ENCODE measurements at regions of chr11 and their contacts with region 1.

Region 1: GRCh38 chr11:66011239-66011784 is 496 bp upstream of the CST6 start:
- DNase-seq: peak; percentile 97
- H3K4me3 ChIP-seq: no peak overlapping the region
- H3K27ac ChIP-seq: peak overlapping the region; percentile 13
- H3K4me1 ChIP-seq: peaks cover 57% of the 10 kb centered on the region
- H3K27me3 ChIP-seq: no peaks in the 10 kb centered on the region
- CTCF ChIP-seq: no peak

Region 2: DNA sequence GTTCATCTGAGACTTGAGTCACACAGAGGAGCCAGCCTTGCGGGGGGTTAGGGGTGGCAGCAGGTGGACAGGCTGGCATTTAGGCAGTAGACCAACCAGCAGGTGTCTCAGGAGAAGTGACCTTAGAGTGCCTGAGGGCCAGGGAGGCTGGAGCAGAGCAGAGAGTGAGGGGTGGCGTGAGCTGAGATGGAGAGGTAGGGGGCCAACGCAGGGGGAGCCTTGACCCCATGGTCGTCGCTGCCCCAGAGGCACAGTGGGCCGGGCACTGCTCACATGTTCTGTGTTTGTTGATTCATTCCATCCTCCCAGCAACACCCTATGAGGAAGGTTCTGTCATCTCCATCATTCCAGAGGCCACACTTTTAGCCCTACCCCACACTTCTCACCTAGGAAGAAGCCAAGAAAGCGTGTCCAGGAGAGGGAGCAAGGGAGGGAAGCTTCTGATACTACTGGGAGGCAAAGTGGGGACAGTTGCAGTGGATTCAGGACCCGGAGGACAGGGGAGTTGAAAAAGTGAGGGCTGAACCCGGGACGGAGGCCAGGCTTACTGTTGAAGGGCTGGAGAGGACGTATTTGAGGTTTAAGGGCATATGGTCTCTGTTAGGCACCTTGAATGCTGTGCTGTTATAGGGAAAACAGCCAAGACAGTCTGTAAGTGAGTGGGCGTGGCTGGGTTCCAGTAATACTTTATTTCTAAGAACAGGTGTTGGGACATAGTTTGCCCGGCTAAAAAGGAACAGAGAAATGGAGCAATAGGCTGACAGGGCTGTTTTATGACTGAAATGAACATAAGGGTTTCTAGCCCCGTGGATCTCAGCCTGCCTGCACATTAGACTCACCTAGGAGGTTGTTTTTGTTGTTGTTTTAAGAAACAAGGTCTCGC is 42.5 kb before region 1 on chr11:
- CTCF ChIA-PET with region 1: no interaction called
- dilution Hi-C with region 1: loop called (anchors 5 kb)
- in situ Hi-C with region 1: no loop called
- intact Hi-C with region 1: no loop called
- DNase-seq: no peak
- H3K4me3 ChIP-seq: no peak overlapping the region
- H3K27ac ChIP-seq: no peak overlapping the region
- H3K4me1 ChIP-seq: peaks cover 9% of the 10 kb centered on the region
- H3K27me3 ChIP-seq: no peaks in the 10 kb centered on the region
- CTCF ChIP-seq: no peak

Region 3: GRCh38 chr11:66022401-66023185 is 11.3 kb after region 1 on chr11:
- CTCF ChIA-PET with region 1: interaction called, 3 read pairs
- dilution Hi-C with region 1: no loop called
- in situ Hi-C with region 1: no loop called
- intact Hi-C with region 1: loop called (anchors 1 kb)
- DNase-seq: peak; percentile 43
- H3K4me3 ChIP-seq: peak overlapping the region in 1 of 3 experiments; percentile 9
- H3K27ac ChIP-seq: no peak overlapping the region
- H3K4me1 ChIP-seq: peaks cover 17% of the 10 kb centered on the region
- H3K27me3 ChIP-seq: no peaks in the 10 kb centered on the region
- CTCF ChIP-seq: peak; percentile 79 to 92